RWPE1 (cell line): ENCODE measurements at regions of chr11 and their contacts with region 1.

Region 1: GRCh38 chr11:60615497-60615896 is 83.9 kb upstream of the MS4A8 start:
- DNase-seq: no peak
- H3K27ac ChIP-seq: no peak overlapping the region
- CTCF ChIP-seq: no peak

Region 2: GRCh38 chr11:60363542-60364510 is 251.7 kb before region 1 on chr11:
- CTCF ChIA-PET with region 1: interaction called, 15 read pairs
- POLR2A ChIA-PET with region 1: no interaction called
- DNase-seq: peak; percentile 45
- H3K27ac ChIP-seq: no peak overlapping the region
- CTCF ChIP-seq: peak; percentile 80

Region 3: GRCh38 chr11:60570970-60571369 is 44.5 kb before region 1 on chr11:
- CTCF ChIA-PET with region 1: no interaction called
- POLR2A ChIA-PET with region 1: no interaction called
- DNase-seq: no peak
- H3K27ac ChIP-seq: no peak overlapping the region
- CTCF ChIP-seq: no peak